ENCODE measurements at regions of chr17 and their contacts with region 1.

Region 1: DNA sequence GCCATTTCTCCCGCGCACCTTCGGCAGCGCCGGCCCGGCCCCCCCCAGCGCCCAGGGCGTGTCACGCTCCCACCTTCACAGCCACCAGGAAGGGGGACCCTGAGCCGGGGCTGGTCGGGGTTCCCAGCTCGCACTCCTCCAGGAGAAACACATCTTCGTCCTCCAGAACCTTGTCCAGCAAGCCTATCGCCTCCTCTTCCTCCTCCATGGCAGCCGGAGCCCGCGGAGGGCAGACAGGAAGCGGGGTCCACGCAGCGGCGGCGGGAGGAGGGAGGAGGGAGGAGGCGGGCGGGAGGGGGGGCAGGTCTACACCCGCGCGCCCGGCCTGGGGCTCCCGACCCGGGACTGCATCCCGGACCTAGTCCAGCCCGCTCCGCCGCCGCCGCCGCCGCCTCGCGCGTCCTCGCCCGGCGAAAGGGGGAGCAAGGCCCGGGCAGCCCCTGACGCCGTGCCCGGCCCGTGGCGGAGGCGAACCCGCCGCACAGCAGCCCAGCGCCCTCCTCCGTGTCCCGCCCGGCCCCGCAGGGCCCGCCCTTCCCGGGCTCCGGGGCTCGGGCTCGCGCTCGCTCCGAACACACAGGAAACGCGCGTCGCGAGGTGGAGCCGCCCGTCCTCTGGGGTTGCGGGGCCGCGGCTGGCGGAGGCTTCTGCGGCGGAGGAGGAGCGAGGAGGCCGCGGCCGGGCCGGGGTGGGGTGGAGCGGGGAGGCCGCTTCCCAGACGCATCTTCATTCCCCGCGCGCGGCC is 70.7 kb downstream of the ABR start:
- DNase-seq: peak in 1 of 2 experiments; percentile 68
- H3K4me3 ChIP-seq: peak overlapping the region; percentile 92
- H3K4me3 Mint-ChIP-seq: peak overlapping the region; percentile 85
- H3K27ac Mint-ChIP-seq: peak overlapping the region; percentile 73
- H3K4me1 ChIP-seq: peaks cover 32% of the 10 kb centered on the region
- H3K4me1 Mint-ChIP-seq: peaks cover 21% of the 10 kb centered on the region
- H3K27me3 ChIP-seq: no peaks in the 10 kb centered on the region
- H3K27me3 Mint-ChIP-seq: no peaks in the 10 kb centered on the region
- CTCF ChIP-seq: no peak

Region 2: DNA sequence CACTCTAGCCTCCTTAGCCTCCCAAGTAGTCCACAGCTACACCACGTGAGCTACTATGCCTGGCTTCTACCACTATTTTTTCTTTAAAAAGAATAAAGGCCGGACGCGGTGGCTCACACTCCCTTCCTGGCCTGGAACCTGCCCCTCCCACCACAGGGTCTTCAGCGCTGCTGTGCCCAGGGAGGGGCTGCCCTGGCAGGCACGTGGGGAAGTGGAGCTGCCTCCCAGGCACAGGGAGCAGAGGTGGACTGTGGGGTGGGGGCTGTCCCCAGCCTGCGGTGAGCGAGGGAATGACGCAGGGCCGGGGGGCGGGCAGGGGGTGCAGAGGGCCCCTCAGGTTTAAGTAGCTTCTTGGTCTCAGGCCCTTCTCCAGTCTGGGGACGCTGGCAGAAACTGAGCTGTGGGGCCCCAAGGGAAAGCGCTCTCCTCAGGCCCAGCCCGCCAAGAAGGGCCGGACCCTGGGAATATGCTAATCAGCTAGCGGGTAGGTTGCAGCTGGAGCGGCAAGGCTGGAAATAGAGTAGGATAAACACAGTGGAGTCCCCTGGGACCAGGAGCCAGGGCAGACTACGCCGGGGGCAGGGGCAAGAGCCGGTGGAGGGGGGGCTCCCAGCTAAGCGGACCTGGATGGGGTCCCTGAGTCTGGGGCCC is 65.3 kb before region 1 on chr17:
- CTCF ChIA-PET with region 1: no interaction called
- POLR2A ChIA-PET with region 1: no interaction called
- intact Hi-C with region 1: no loop called
- DNase-seq: no peak
- H3K4me3 ChIP-seq: no peak overlapping the region
- H3K4me3 Mint-ChIP-seq: no peak overlapping the region
- H3K27ac Mint-ChIP-seq: no peak overlapping the region
- H3K4me1 ChIP-seq: peaks cover 18% of the 10 kb centered on the region
- H3K4me1 Mint-ChIP-seq: no peaks in the 10 kb centered on the region
- H3K27me3 ChIP-seq: no peaks in the 10 kb centered on the region
- H3K27me3 Mint-ChIP-seq: no peaks in the 10 kb centered on the region
- CTCF ChIP-seq: no peak

Region 3: GRCh38 chr17:1137465-1137894 is 28.4 kb after region 1 on chr17:
- CTCF ChIA-PET with region 1: interaction called, 7 read pairs
- POLR2A ChIA-PET with region 1: interaction called, 13 read pairs
- intact Hi-C with region 1: no loop called
- DNase-seq: peak; percentile 94 to 96
- H3K4me3 ChIP-seq: peak overlapping the region; percentile 59
- H3K4me3 Mint-ChIP-seq: peak overlapping the region; percentile 78
- H3K27ac Mint-ChIP-seq: peak overlapping the region; percentile 81
- H3K4me1 ChIP-seq: peaks cover 4% of the 10 kb centered on the region; the same call in 1 of the 2 replicates
- H3K4me1 Mint-ChIP-seq: peaks cover 9% of the 10 kb centered on the region
- H3K27me3 ChIP-seq: no peaks in the 10 kb centered on the region
- H3K27me3 Mint-ChIP-seq: no peaks in the 10 kb centered on the region
- CTCF ChIP-seq: no peak

Region 4: GRCh38 chr17:1203111-1203966 is 94.3 kb after region 1 on chr17:
- CTCF ChIA-PET with region 1: no interaction called
- POLR2A ChIA-PET with region 1: no interaction called
- intact Hi-C with region 1: no loop called
- DNase-seq: peak in 1 of 2 experiments; percentile 60
- H3K4me3 ChIP-seq: no peak overlapping the region
- H3K4me3 Mint-ChIP-seq: no peak overlapping the region
- H3K27ac Mint-ChIP-seq: no peak overlapping the region
- H3K4me1 ChIP-seq: peaks cover 16% of the 10 kb centered on the region
- H3K4me1 Mint-ChIP-seq: peaks cover 8% of the 10 kb centered on the region
- H3K27me3 ChIP-seq: no peaks in the 10 kb centered on the region
- H3K27me3 Mint-ChIP-seq: no peaks in the 10 kb centered on the region
- CTCF ChIP-seq: no peak